Psoas muscle (tissue), 8 donors: ENCODE measurements at regions of chr19 and their contacts with region 1.

Region 1: DNA sequence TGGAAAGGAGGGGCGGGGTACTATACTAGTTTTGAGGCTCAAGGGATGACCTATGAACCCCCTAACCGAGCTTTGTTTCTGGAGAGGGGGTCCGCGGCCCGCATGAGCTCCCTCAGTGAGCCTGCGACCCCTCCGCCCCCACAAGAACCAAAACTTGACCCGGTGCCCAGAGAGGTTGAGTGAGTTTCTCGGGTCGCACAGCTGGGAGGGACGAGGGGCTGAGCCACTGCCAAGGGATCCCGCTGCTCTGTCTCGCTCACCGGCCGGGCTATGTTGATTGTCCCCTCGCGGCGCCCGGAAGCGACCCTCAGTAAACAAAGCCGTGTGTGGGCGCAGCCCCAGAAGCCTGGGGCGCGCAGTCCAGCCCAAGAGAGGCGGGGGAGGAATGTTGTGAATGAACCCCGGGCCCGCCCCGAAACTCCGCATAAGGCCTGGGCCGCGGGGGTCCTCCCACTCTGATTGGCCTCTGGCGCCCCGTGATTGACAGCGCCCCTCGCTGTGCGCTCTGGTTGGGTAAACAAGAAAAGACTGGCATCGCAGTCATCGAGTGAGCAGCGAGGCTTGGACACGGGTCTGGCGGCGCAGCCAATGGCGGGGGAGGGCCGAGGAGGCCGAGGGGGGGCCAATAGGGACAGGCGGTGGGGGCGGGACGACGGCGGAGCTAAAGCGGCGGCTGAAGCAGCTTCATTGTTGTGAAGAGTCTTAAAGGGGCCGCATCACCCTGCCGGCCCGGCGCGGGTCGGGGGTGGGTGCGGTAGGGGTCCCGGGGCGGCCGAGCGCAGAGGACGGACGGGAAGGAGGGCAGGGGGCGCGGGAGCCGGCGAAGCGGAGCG is at the start of gene ZSWIM4:
- DNase-seq: peak; percentile 99
- ATAC-seq: peak; percentile 97 to 98 (median 98)
- H3K4me3 ChIP-seq: peak within 1 kb of the TSS; percentile 79
- H3K27ac ChIP-seq: peak within 1 kb of the TSS; percentile 93
- H3K4me1 ChIP-seq: peaks cover 20% of the 10 kb centered on the region
- H3K27me3 ChIP-seq: no peaks in the 10 kb centered on the region
- CTCF ChIP-seq: no peak
- total RNA-seq, gene ZSWIM4: 3.3 to 7.8 (median 4.4) TPM

Region 2: GRCh38 chr19:13817615-13818371 is 22.8 kb after region 1 on chr19:
- intact Hi-C with region 1: no loop called
- DNase-seq: no peak
- ATAC-seq: peak in 2 of 4 donors; percentile 13 to 15
- H3K4me3 ChIP-seq: no peak overlapping the region
- H3K27ac ChIP-seq: no peak overlapping the region
- H3K4me1 ChIP-seq: no peaks in the 10 kb centered on the region
- H3K27me3 ChIP-seq: no peaks in the 10 kb centered on the region
- CTCF ChIP-seq: no peak

Region 3: DNA sequence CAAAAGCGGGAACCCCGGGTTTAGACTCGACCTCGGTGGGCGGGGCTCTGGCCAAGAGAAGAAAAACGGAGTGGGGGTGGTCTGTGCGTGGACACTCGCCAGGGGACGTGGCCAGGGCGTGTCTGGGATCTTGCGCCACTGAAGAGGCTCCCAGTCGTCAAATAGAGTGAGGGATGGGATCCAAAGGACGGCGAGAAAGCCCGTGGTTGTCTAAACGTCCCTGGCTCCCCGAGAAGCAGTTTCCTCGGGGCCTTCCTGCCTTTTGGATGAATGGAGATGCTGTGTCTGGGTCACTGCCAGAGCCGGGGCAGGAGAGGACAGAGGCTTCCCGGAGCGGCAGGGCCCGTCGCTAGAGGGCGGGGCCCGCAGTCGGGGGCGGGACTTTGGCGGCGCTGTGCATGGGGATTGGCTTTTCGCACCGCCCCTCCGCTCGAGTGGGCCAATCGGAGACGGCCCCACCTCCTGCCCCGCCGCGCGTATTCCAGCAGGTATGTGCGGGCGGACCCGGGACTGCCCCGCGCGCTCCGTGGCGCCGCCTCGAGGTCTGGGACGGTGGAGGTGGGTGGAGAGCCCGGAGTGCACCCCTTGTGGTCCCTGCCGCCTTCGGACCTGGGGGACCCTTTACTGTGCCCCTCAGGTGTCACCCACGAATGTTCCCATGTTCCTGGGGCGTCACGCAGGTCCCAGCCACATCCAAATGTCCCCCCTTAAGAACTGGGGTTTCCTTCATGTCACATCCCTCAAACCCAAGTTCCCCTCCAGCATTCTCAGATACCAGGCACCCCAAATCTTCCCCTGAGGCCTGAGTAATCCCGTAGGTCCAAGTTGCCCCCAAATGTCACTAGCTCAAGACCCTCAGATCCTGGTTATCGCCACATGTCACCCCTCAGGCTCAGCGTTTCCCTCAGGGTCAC is 38.6 kb after region 1 on chr19:
- intact Hi-C with region 1: loop called (anchors 5 kb)
- DNase-seq: peak; percentile 98
- ATAC-seq: peak; percentile 82 to 87 (median 84)
- H3K4me3 ChIP-seq: peak overlapping the region; percentile 5
- H3K27ac ChIP-seq: peak overlapping the region; percentile 100
- H3K4me1 ChIP-seq: peaks cover 43% of the 10 kb centered on the region
- H3K27me3 ChIP-seq: no peaks in the 10 kb centered on the region
- CTCF ChIP-seq: peak; percentile 42